ENCODE measurements at regions of chr13 and their contacts with region 1.

Region 1: DNA sequence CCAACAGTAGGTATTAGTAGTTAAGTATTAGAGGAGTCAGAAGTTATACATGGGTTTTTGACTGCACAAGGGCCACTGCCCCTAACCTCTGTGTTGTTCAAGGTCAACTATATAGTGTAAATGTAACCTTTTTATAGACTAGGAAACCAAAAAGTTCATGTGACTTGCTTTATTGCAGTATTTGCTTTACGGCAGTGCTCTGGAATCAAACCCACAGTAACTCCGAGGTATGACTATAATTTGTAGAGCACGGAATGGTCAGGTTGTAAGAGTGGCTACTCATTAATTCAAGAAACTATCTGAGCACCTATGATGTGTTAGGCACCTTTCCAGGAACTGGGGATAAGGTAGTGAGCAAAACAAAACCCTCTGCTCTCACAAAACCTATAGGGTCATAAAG is 22.3 kb downstream of the SUPT20H start:
- DNase-seq: no peak
- ATAC-seq: no peak
- H3K4me3 ChIP-seq: no peak overlapping the region
- H3K27ac ChIP-seq: no peak overlapping the region
- H3K4me1 ChIP-seq: no peaks in the 10 kb centered on the region
- H3K27me3 ChIP-seq: no peaks in the 10 kb centered on the region
- CTCF ChIP-seq: no peak
- POLR2A ChIP-seq: no peak

Region 2: GRCh38 chr13:37014609-37015008 is 22.6 kb before region 1 on chr13:
- intact Hi-C with region 1: loop called in 1 of 10 experiments (anchors 1 kb)
- DNase-seq: no peak
- ATAC-seq: no peak
- H3K4me3 ChIP-seq: no peak overlapping the region
- H3K27ac ChIP-seq: no peak overlapping the region
- H3K4me1 ChIP-seq: no peaks in the 10 kb centered on the region
- H3K27me3 ChIP-seq: no peaks in the 10 kb centered on the region
- CTCF ChIP-seq: no peak
- POLR2A ChIP-seq: no peak

Region 3: GRCh38 chr13:37097076-37097475 is 59.8 kb after region 1 on chr13:
- intact Hi-C with region 1: no loop called
- DNase-seq: no peak
- ATAC-seq: no peak
- H3K4me3 ChIP-seq: no peak overlapping the region
- H3K27ac ChIP-seq: no peak overlapping the region
- H3K4me1 ChIP-seq: no peaks in the 10 kb centered on the region
- H3K27me3 ChIP-seq: no peaks in the 10 kb centered on the region
- CTCF ChIP-seq: no peak
- POLR2A ChIP-seq: no peak

Region 4: DNA sequence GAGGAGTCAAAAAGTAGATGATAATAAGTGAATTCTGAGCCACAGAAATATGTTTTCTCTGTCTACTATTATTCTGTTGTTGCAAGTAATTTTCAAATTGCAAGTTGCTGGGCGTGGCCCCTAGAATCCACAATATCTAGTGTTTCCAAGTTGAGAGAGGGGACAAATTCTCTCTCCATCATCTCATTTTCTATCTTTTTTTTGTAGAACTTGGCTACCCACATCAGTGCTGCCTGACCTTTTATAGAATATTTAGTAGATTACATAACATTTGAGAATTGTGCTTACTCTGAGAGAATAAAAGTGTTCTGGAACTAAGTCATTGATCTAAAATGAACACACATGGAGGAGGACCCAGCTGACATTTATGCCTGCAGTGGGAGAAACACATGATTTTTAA is 179.1 kb after region 1 on chr13:
- intact Hi-C with region 1: no loop called
- DNase-seq: no peak
- ATAC-seq: no peak
- H3K4me3 ChIP-seq: no peak overlapping the region
- H3K27ac ChIP-seq: no peak overlapping the region
- H3K4me1 ChIP-seq: no peaks in the 10 kb centered on the region
- H3K27me3 ChIP-seq: no peaks in the 10 kb centered on the region
- CTCF ChIP-seq: no peak
- POLR2A ChIP-seq: no peak